Activated naive CD4-positive, alpha-beta T cell treated with anti-CD3 and anti-CD28 coated beads for 36 hours (primary cell): ENCODE measurements at regions of chr17 and their contacts with region 1.

Region 1: GRCh38 chr17:29617125-29617480 is 5.6 kb downstream of the CORO6 start:
- DNase-seq: peak; percentile 97
- H3K4me3 Mint-ChIP-seq: peak overlapping the region; percentile 81
- H3K27ac Mint-ChIP-seq: peak overlapping the region; percentile 80
- H3K4me1 Mint-ChIP-seq: peaks cover 48% of the 10 kb centered on the region
- H3K27me3 Mint-ChIP-seq: peaks cover 9% of the 10 kb centered on the region

Region 2: GRCh38 chr17:29148790-29149430 is 468.2 kb before region 1 on chr17:
- CTCF ChIA-PET with region 1: interaction called, 3 read pairs
- intact Hi-C with region 1: loop called (anchors 5 kb)
- DNase-seq: peak; percentile 94
- H3K4me3 Mint-ChIP-seq: peak overlapping the region; percentile 65
- H3K27ac Mint-ChIP-seq: peak overlapping the region; percentile 74
- H3K4me1 Mint-ChIP-seq: peaks cover 43% of the 10 kb centered on the region
- H3K27me3 Mint-ChIP-seq: no peaks in the 10 kb centered on the region

Region 3: GRCh38 chr17:29389982-29390850 is 226.9 kb before region 1 on chr17 and contains the start of gene TAOK1:
- CTCF ChIA-PET with region 1: no interaction called
- intact Hi-C with region 1: loop called (anchors 5 kb)
- DNase-seq: peak; percentile 99
- H3K4me3 Mint-ChIP-seq: peak within 1 kb of the TSS; percentile 94
- H3K27ac Mint-ChIP-seq: peak within 1 kb of the TSS; percentile 88
- H3K4me1 Mint-ChIP-seq: peaks cover 44% of the 10 kb centered on the region
- H3K27me3 Mint-ChIP-seq: no peaks in the 10 kb centered on the region
- total RNA-seq, gene TAOK1: 21.8 to 21.9 TPM

Region 4: GRCh38 chr17:29589524-29590410 is 27.3 kb before region 1 on chr17 and contains the start of gene GIT1:
- CTCF ChIA-PET with region 1: interaction called, 91 read pairs
- intact Hi-C with region 1: loop called (anchors 1 kb)
- DNase-seq: peak; percentile 84
- H3K4me3 Mint-ChIP-seq: peak within 1 kb of the TSS; percentile 93
- H3K27ac Mint-ChIP-seq: peak within 1 kb of the TSS; percentile 88
- H3K4me1 Mint-ChIP-seq: peaks cover 70% of the 10 kb centered on the region
- H3K27me3 Mint-ChIP-seq: no peaks in the 10 kb centered on the region
- total RNA-seq, gene GIT1: 35.5 to 37.5 TPM

Region 5: DNA sequence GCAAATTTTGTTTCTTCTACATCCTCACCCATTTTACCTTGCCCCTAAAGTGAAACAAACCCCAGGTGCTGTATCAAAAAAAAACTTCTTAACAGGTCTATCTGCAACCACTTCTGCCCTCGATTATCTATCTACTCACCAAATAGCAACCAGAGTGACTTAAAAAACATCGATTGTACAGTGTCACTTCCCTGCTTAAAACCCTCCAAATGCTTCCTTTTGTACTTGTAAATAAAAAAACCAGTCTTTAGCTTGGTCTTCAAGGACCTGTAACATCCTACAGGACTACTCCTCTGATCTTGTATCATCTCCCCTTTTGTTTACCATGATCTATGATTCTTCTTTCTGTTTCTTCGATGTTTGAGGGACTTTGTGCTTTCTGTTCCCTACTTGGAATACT is 88.3 kb after region 1 on chr17:
- CTCF ChIA-PET with region 1: interaction called, 14 read pairs
- intact Hi-C with region 1: no loop called
- DNase-seq: no peak
- H3K4me3 Mint-ChIP-seq: peak overlapping the region; percentile 55
- H3K27ac Mint-ChIP-seq: peak overlapping the region; percentile 96
- H3K4me1 Mint-ChIP-seq: peaks cover 46% of the 10 kb centered on the region
- H3K27me3 Mint-ChIP-seq: no peaks in the 10 kb centered on the region

Region 6: GRCh38 chr17:29931231-29931932 is 314.3 kb after region 1 on chr17:
- CTCF ChIA-PET with region 1: interaction called, 18 read pairs
- intact Hi-C with region 1: loop called (anchors 1 kb)
- DNase-seq: peak; percentile 78
- H3K4me3 Mint-ChIP-seq: no peak overlapping the region
- H3K27ac Mint-ChIP-seq: no peak overlapping the region
- H3K4me1 Mint-ChIP-seq: peaks cover 16% of the 10 kb centered on the region
- H3K27me3 Mint-ChIP-seq: no peaks in the 10 kb centered on the region